Dorsolateral prefrontal cortex (tissue), 120 donors: ENCODE measurements at regions of chr3 and their contacts with region 1.

Region 1: DNA sequence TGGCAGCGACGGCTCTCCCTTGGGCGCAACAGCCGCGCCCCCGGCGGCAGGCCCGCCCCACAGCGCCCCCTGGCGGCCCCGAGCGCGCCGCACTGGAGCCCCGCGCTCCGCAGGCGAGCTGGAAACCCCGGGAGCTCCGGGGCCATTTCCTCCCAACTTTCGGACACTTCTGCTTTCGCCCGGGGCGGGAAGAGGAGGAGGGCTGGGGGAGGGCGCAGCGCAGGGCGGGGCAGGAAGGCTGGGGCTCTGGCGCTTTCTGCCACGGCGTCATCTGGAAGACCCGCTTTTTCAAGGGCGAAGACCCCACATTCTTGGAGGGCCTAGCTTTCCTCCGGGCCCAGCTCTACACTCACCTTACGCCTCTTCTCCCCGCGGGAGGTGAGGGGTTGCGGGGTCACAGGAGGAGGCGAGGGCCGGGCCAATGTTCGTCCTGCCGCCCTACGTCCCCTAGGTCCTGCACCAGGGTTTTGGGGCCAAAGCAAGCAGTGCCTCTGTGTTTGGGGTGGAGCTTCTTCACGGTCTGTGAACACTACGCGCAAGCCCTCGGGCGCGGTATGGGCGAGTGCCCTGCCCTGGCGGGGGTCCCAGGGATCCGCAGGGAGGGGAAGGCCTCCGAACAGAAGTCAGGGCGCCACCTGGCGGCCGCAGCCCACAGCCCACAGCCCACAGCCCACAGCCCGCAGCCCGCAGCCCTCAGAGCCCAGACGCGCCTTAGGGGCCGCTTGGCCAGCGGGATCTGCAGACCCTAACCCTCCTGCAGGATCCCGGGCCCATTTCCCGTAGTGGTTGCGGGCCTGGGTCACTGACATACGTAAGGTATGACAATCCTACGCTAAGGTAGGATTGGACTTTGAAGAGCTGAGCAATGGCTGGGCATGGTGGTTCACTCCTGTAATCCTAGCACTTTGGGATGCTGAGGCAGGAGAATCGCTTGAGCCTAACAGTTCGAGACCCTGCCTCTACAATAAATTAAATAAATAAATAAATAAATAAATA is 31.1 kb downstream of the FOXL2 start:
- DNase-seq: peak; percentile 78 to 90 (median 86)
- H3K4me3 ChIP-seq: peak overlapping the region; percentile 50 to 96 (median 79)
- H3K27ac ChIP-seq: peak overlapping the region; percentile 7 to 97 (median 88)
- H3K27me3 ChIP-seq: no peaks in the 10 kb centered on the region
- CTCF ChIP-seq: peak; percentile 63 to 97 (median 83)

Region 2: GRCh38 chr3:138608322-138609135 is 307.3 kb before region 1 on chr3 and contains the start of gene FAIM:
- intact Hi-C with region 1: loop called in 1 of 2 experiments (anchors 5 kb)
- DNase-seq: peak; percentile 47 to 79 (median 62)
- H3K4me3 ChIP-seq: peak within 1 kb of the TSS; percentile 44 to 91 (median 80)
- H3K27ac ChIP-seq: peak within 1 kb of the TSS; percentile 55 to 99 (median 94)
- H3K27me3 ChIP-seq: no peaks in the 10 kb centered on the region
- CTCF ChIP-seq: peak in 5 of 56 donors; percentile 9 to 26 (median 15)
- total RNA-seq, gene FAIM: 6.4 to 20.4 (median 11.4) TPM

Region 3: DNA sequence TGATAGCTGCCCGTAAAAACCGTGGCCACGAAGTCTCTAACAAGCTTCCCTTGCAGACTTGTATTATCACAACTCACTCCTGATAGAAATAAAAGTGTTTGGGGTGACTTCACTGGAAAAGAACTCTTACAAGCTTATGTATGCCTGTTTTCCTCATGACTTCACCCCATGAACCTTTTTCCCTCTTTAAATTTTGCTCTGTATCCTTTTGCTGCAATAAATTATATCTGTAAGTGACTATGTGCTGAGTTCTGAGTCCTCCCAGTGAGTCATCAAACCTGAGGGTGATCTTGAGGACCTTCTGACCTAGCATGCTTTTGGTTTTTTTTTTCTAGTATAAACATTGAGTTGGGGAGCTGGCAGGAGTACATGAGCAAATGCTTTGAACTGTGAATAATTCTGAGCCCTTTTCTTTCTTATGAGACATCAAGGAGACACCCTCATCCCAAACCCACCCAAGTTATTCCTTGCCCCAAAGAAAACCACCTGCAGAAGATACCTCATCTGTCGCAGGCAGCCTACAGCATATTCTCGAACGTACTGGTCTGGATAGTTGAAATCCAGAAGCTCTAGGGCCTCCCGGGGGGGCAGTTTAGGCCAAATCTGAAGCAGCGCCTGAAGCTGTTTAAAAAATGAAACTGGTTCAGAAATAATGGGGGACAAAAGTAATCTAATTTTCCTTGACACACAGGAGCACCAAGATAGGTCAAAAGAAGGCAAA is 221.4 kb before region 1 on chr3:
- intact Hi-C with region 1: loop called (anchors 1 to 2 kb)
- DNase-seq: no peak
- H3K4me3 ChIP-seq: no peak overlapping the region
- H3K27ac ChIP-seq: no peak overlapping the region
- H3K27me3 ChIP-seq: no peaks in the 10 kb centered on the region
- CTCF ChIP-seq: no peak

Region 4: DNA sequence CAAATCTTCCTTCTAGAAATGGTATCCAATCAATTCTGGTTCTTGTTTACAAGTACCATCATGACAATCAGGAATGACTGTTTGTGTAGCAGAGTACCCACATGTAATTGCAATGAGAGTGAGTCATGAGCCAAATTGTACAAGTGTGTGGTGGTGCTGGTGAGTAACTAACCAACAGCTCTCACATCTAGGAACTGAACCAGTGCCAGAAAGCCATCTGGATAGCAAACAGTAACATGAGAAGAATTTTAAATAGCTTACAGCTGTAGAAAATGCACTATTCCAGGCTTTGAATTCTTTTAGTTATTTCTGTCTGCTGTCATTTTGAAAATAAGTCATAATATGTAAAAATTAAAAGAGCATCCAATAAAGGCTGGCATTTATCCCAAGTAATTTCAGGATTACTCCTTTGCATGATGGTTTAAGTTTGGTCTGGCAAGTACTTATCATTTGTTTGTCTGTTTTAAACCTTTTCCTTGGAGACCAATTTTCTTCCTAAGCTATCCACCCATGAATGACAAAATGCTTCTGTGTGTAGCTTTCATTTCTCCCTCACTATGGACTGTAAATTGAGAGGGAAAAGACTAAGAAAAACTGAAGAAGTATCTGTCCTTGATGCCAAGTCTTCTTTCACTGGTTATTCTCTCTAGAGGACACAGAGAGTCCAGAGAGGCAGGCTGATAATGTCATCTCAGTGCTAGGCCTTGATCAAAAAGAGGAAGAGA is 141.1 kb before region 1 on chr3:
- intact Hi-C with region 1: loop called (anchors 2 to 10 kb)
- DNase-seq: peak in 7 of 10 donors; percentile 46 to 88 (median 59)
- H3K4me3 ChIP-seq: peak overlapping the region in 8 of 59 donors; percentile 3 to 38 (median 20)
- H3K27ac ChIP-seq: peak overlapping the region in 58 of 59 donors; percentile 64 to 95 (median 89)
- H3K27me3 ChIP-seq: no peaks in the 10 kb centered on the region
- CTCF ChIP-seq: peak in 35 of 56 donors; percentile 5 to 55 (median 24)

Region 5: GRCh38 chr3:138834359-138835212 is 81.2 kb before region 1 on chr3 and contains the start of gene PIK3CB:
- intact Hi-C with region 1: loop called (anchors 1 kb)
- DNase-seq: peak; percentile 73 to 93 (median 87)
- H3K4me3 ChIP-seq: peak within 1 kb of the TSS; percentile 73 to 99 (median 94)
- H3K27ac ChIP-seq: peak within 1 kb of the TSS; percentile 88 to 99 (median 97)
- H3K27me3 ChIP-seq: no peaks in the 10 kb centered on the region
- CTCF ChIP-seq: peak in 44 of 56 donors; percentile 4 to 55 (median 31)
- total RNA-seq, gene PIK3CB: 36.8 to 102 (median 70.6) TPM